ENCODE measurements at regions of chr2 and their contacts with region 1.

Region 1: DNA sequence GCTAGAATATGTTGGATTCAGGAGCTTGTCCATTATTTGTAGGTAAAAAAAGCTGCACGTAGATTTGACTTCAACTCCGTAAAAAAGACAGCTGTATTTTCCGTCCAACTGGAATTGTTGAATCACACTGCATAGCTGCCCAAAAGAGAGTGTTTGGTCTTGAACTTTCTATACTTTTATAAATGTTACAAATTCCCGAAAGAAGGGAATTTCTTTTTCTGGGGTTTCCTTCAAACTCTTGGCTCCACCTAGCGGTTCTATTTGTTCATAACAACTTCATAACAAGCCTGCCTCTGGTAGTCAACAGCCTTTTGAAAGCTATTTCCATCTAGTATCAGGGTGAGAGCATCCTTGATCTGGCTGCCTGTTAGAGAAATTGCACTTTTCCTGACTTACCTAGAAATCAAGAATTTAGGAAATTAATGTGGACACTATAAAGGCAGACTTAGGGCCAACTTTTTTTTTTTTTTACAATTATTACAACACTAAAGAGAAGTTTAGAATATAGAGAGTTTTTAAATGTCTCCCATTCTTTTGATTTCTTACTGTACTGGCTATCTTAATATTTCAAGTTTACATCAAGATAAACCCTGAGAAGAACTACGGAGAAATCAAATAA is 48.1 kb downstream of the TMEM185B start:
- DNase-seq: no peak
- ATAC-seq: peak; percentile 34 to 38
- H3K4me3 ChIP-seq: no peak overlapping the region
- H3K27ac ChIP-seq: peak overlapping the region in 1 of 4 donors; percentile 12
- H3K4me1 ChIP-seq: peaks cover 16 to 18% of the 10 kb centered on the region in 2 donors
- H3K27me3 ChIP-seq: no peaks in the 10 kb centered on the region
- CTCF ChIP-seq: peak; percentile 61 to 79 (median 71)
- POLR2A ChIP-seq: no peak

Region 2: GRCh38 chr2:119702918-119703401 is 472.1 kb before region 1 on chr2:
- in situ Hi-C with region 1: loop called in 3 of 4 experiments (anchors 10 to 25 kb)
- intact Hi-C with region 1: loop called (anchors 1 kb)
- DNase-seq: peak; percentile 48 to 57
- ATAC-seq: peak; percentile 72 to 92
- H3K4me3 ChIP-seq: no peak overlapping the region
- H3K27ac ChIP-seq: no peak overlapping the region
- H3K4me1 ChIP-seq: no peaks in the 10 kb centered on the region
- H3K27me3 ChIP-seq: no peaks in the 10 kb centered on the region
- CTCF ChIP-seq: peak; percentile 77 to 99 (median 94)
- POLR2A ChIP-seq: no peak

Region 3: GRCh38 chr2:119753041-119753929 is 421.8 kb before region 1 on chr2:
- in situ Hi-C with region 1: loop called in 3 of 4 experiments (anchors 5 to 25 kb)
- intact Hi-C with region 1: loop called (anchors 2 kb)
- DNase-seq: no peak
- ATAC-seq: peak; percentile 42 to 46
- H3K4me3 ChIP-seq: no peak overlapping the region
- H3K27ac ChIP-seq: peak overlapping the region in 2 of 4 donors; percentile 6 to 8
- H3K4me1 ChIP-seq: peaks cover 0 to 21% of the 10 kb centered on the region in 2 donors
- H3K27me3 ChIP-seq: no peaks in the 10 kb centered on the region
- CTCF ChIP-seq: peak in 4 of 5 experiments; percentile 55 to 82 (median 68)
- POLR2A ChIP-seq: no peak

Region 4: GRCh38 chr2:120109186-120110061 is 65.6 kb before region 1 on chr2:
- in situ Hi-C with region 1: loop called in 1 of 4 experiments (anchors 10 kb)
- intact Hi-C with region 1: loop called (anchors 1 kb)
- DNase-seq: no peak
- ATAC-seq: no peak
- H3K4me3 ChIP-seq: no peak overlapping the region
- H3K27ac ChIP-seq: peak overlapping the region in 2 of 4 donors; percentile 7 to 78
- H3K4me1 ChIP-seq: peaks cover 28 to 33% of the 10 kb centered on the region in 2 donors
- H3K27me3 ChIP-seq: no peaks in the 10 kb centered on the region
- CTCF ChIP-seq: peak in 4 of 5 experiments; percentile 31 to 45 (median 38)
- POLR2A ChIP-seq: no peak

Region 5: DNA sequence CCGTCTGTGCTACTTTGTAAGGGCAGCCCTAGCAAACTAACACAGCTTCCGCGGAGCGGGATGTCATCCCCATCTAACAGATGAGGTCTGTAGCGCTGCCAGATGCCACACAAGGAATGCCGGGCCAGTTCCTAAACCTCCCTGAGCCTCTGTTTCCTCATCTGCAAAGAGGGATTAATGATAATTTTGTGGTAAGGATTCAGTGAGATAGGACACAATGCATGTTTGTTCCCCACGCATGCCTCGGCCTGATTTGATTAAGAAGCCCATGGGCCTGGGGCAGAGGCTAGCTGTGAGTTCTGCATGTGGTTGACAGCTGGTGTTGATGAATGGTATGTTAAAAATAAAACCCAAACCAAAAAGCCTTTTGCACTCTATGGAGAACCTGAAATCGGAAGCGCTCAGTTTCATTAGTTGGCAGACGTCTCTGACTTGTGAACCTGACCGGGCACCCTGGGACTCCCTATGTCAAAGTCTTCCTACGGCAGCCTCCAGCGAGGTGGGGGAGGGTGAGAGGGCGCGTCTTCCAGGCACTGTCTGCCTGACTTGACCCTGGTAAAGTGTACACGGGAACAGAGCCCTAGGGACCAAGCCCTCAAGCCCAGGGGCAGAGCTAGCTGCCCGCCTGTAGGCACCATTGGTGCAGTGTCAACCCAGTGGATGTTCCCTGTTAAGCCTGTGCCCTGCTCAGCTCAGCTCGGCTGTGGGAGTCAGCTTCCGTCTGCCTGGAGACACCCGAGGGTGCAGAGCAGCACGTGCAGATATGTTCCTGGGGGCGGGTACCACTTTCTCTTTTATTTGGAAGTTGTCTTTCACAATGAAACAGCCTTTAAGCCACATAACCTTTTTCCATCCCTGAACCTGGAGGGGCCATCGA is 156.1 kb after region 1 on chr2:
- in situ Hi-C with region 1: no loop called
- intact Hi-C with region 1: no loop called
- DNase-seq: no peak
- ATAC-seq: peak; percentile 66 to 72
- H3K4me3 ChIP-seq: no peak overlapping the region
- H3K27ac ChIP-seq: no peak overlapping the region
- H3K4me1 ChIP-seq: no peaks in the 10 kb centered on the region
- H3K27me3 ChIP-seq: peaks cover 0 to 3% (median 0%) of the 10 kb centered on the region in 3 donors
- CTCF ChIP-seq: no peak
- POLR2A ChIP-seq: no peak